ENCODE measurements at regions of chr19 and their contacts with region 1.

Region 1: GRCh38 chr19:14006243-14006765 is at the start of gene RFX1:
- DNase-seq: peak; percentile 100
- ATAC-seq: peak; percentile 83
- H3K4me3 ChIP-seq: peak within 1 kb of the TSS; percentile 42
- H3K4me1 ChIP-seq: peaks cover 16% of the 10 kb centered on the region
- CTCF ChIP-seq: no peak
- total RNA-seq, gene RFX1: 15.8 to 17.9 (median 17.1) TPM

Region 2: DNA sequence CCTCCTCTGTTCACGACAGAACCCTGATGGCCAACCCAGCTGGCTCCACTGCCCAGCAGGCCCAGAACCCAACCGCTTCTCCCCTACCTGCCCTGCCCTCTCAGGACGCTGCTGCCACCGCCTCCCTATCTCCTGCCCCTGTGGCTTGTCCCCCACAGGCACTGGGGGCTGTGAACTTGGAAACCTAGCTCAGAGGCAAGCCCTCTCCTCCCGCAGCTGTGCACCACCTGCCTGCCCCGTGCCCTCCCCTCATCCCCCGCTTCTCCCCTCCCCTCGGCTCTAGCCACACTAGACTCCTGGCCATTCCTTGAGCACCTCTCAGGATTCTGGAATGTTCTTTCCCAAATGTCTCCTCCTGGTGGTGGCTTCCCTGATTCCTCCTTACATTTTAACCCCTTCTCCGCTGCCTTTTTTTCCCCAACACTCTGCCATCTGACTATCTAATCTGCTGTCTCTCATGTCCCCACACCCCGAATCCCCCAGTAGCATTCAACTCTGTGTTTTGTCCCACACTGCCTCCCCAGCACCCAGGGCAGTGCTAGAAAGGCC is 122.7 kb before region 1 on chr19:
- intact Hi-C with region 1: no loop called
- DNase-seq: no peak
- ATAC-seq: no peak
- H3K4me3 ChIP-seq: no peak overlapping the region
- H3K4me1 ChIP-seq: peaks cover 65% of the 10 kb centered on the region
- CTCF ChIP-seq: no peak

Region 3: GRCh38 chr19:14059093-14059480 is 52.8 kb after region 1 on chr19:
- intact Hi-C with region 1: no loop called
- DNase-seq: peak in 1 of 3 donors; percentile 52
- ATAC-seq: peak; percentile 28
- H3K4me3 ChIP-seq: no peak overlapping the region
- H3K4me1 ChIP-seq: peaks cover 11% of the 10 kb centered on the region
- CTCF ChIP-seq: peak; percentile 69

Region 4: DNA sequence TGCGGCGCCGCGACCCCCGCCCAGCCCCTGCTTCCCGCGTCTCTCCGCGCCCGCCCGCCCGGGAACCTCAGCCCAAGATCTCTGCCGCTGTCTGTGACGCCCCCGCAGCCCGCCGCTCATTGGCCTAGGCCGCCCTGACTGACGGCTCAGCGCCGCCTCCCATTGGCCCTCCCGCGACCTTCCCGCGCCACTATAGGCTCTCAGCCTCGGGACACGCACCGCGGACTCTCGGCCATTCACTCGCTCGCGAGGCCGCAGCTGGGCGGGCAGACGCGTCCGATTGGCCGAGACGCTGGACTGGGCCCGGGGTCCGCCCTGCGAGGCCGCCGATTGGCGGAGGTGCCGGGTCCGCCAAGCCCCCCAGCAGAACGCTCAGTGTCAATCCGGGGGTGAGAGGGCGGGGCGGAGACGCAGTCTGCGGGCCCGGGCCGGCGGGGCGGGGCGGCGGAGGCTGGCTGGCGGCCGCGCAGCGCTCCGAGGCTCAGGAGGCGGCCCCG is 111.4 kb after region 1 on chr19 and contains the start of gene PRKACA:
- intact Hi-C with region 1: loop called in 1 of 2 experiments (anchors 5 kb)
- DNase-seq: peak; percentile 97 to 99 (median 99)
- ATAC-seq: peak; percentile 93
- H3K4me3 ChIP-seq: peak within 1 kb of the TSS; percentile 56
- H3K4me1 ChIP-seq: peaks cover 40% of the 10 kb centered on the region
- CTCF ChIP-seq: no peak
- total RNA-seq, gene PRKACA: 75.4 to 100 (median 89.1) TPM

Region 5: GRCh38 chr19:14218620-14219330 is 212.5 kb after region 1 on chr19:
- intact Hi-C with region 1: no loop called
- DNase-seq: no peak
- ATAC-seq: no peak
- H3K4me3 ChIP-seq: no peak overlapping the region
- H3K4me1 ChIP-seq: peaks cover 3% of the 10 kb centered on the region
- CTCF ChIP-seq: no peak